IMR-90 (cell line): ENCODE measurements at regions of chr16 and their contacts with region 1.

Region 1: DNA sequence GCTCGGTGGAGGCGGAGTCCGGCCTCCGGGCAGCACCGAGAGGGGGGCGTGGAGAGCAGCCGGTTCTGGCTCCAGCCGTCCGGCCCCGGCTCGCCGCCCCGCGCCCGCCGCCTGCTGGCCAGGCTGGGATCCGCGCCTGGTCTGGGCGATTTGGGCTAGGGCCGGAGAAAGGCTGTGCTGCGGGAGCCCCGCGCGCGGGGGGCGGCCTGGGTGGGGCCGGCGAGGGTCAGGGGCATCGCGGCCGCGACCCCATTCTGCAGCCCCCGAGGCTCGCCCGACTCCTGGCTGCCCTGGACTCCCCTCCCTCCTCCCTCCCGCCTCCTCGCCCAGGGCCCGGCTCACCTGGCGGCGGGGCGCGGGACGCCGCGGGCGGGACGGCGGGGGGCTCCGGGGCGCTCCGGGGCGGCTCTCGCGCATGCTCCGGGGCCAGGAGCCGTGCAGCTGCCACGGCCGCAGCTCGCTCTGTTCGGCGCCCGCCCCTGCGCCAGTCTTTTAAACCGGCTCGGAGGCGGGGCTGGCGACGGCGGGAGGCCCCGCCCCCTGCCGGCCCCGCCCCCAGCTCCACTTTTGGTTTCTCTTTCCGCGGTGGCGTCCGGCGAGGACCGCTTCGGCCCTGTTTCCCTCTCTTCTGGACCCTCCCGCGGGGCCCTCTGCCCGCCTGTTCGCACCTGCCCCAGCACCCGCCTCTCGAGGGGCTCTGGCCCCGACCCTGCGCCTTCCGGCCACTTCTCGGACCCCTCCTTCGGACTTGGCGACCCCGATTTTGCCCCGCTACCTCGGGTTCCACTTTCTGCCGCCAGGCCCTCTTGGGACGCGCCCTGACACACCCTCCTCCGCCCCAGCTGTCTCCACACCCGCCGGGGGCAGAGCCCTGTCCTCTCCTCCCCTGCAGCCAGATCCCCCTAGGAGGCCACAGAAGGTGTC is at the start of gene SOCS1:
- DNase-seq: peak; percentile 84
- ATAC-seq: peak; percentile 76
- H3K4me3 ChIP-seq: peak within 1 kb of the TSS; percentile 87
- H3K27ac ChIP-seq: peak within 1 kb of the TSS; percentile 97
- H3K4me1 ChIP-seq: peaks cover 21% of the 10 kb centered on the region
- H3K27me3 ChIP-seq: no peaks in the 10 kb centered on the region
- CTCF ChIP-seq: peak; percentile 82
- POLR2A ChIP-seq: peak; percentile 99
- RAD21 ChIP-seq: peak; percentile 85
- total RNA-seq, gene SOCS1: 2.0 and 2.2 TPM in 2 replicates

Region 2: DNA sequence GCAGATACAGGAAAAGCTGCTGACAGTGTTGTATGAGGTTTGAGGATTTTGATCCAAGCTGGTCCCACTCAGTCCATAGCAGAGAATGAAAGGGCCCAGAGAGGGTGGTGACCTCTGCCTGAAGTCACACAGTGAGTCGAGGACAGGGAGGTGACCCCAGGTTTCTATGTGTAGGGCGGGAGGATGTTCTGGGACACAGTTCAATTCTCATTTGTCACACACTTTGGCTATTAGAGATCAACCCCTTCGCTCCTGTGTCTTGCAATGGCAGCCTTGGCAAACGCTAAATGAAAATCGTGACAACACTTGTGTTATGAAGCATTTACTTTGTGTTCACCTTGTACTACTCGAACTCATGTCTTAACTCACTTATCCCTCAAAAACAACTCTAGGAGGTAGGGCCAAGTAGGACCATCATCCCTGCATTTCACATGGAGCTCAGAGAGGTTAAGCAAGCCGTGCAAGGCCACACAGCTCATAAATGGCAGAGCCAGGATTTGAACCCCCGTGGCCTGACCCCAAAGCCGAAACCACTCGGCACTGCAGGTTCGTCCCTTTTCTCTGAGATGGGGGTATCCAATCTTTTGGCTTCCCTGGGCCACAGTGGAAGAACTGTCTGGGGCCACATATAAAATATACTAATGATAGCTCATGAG is 323.9 kb before region 1 on chr16:
- CTCF ChIA-PET with region 1: no interaction called
- POLR2A ChIA-PET with region 1: interaction called, 10 read pairs
- dilution Hi-C with region 1: no loop called
- in situ Hi-C with region 1: no loop called
- intact Hi-C with region 1: no loop called
- DNase-seq: no peak
- ATAC-seq: no peak
- H3K4me3 ChIP-seq: no peak overlapping the region
- H3K27ac ChIP-seq: no peak overlapping the region
- H3K4me1 ChIP-seq: peaks cover 5% of the 10 kb centered on the region
- H3K27me3 ChIP-seq: no peaks in the 10 kb centered on the region
- CTCF ChIP-seq: no peak
- POLR2A ChIP-seq: no peak
- RAD21 ChIP-seq: no peak

Region 3: GRCh38 chr16:10971560-10971961 is 284.4 kb before region 1 on chr16:
- CTCF ChIA-PET with region 1: interaction called, 12 read pairs
- POLR2A ChIA-PET with region 1: interaction called, 5 read pairs
- dilution Hi-C with region 1: no loop called
- in situ Hi-C with region 1: loop called (anchors 5 kb)
- intact Hi-C with region 1: loop called (anchors 1 kb)
- DNase-seq: peak; percentile 92
- ATAC-seq: peak; percentile 81
- H3K4me3 ChIP-seq: no peak overlapping the region
- H3K27ac ChIP-seq: peak overlapping the region; percentile 85
- H3K4me1 ChIP-seq: peaks cover 17% of the 10 kb centered on the region
- H3K27me3 ChIP-seq: no peaks in the 10 kb centered on the region
- CTCF ChIP-seq: peak; percentile 89
- POLR2A ChIP-seq: peak; percentile 58; the same call in 1 of the 2 replicates
- RAD21 ChIP-seq: peak; percentile 99

Region 4: DNA sequence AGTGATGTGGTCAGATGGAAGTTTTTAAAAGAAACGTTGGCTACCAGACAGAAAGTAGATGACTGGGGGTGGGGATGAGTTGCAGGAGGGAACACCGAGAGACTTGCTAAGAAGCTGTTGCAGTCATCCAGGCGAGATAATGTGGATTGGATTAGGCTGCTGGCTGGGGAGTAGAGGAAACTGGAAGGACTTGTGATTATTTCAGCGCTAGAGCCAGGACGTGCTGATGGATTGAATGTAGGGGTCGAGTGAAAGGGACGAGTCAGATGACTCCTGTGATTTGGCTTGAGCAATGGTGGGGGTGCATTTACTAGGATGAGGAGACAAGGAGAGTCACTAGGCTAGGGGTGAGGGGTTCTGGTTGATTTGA is 223.1 kb before region 1 on chr16:
- CTCF ChIA-PET with region 1: no interaction called
- POLR2A ChIA-PET with region 1: interaction called, 7 read pairs
- dilution Hi-C with region 1: no loop called
- in situ Hi-C with region 1: no loop called
- intact Hi-C with region 1: loop called (anchors 5 kb)
- DNase-seq: peak; percentile 80
- ATAC-seq: peak; percentile 45
- H3K4me3 ChIP-seq: no peak overlapping the region
- H3K27ac ChIP-seq: peak overlapping the region; percentile 53; the same call in 1 of the 2 replicates
- H3K4me1 ChIP-seq: peaks cover 38% of the 10 kb centered on the region
- H3K27me3 ChIP-seq: no peaks in the 10 kb centered on the region
- CTCF ChIP-seq: no peak
- POLR2A ChIP-seq: no peak
- RAD21 ChIP-seq: no peak

Region 5: DNA sequence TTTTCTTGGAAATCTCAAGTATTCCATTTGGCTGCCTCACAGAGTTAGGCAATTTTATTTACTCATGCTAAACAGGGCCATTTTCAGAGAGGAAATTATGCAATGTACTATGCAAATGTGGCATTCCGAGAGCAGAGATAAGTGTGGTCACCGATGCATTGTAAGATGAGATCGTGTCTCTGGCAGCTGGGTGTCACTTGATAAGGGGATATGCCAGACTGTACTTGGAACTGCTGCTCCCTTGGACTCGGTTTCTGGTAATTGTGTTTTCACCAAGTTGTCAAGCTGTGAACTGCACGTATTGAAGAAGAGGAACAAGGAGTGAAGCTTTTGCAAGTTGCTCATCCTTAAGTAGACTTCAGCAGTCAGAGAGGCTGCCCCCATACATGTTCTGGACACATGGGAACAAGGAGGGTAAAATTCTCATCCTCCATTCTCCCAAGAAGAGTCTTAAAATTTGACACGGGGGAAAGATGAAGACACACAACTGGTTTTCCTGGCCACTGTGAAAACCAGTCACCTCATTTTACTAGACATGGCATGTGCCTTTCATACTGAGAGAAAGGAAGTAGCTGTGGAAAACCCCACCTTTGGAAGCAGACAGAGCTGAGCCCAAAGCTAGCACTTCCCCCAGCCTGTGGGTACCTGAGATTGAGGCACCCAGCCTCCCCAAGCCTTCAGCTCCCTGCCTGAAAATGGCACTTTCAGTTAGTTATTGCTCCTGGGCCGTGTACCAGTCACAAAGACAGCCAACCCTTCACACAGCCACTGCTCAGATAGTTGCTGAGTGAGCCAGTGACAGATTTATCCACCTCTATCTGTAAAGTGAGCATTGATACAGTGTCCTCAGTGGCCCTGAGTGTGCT is 150.7 kb before region 1 on chr16:
- CTCF ChIA-PET with region 1: interaction called, 8 read pairs
- POLR2A ChIA-PET with region 1: interaction called, 5 read pairs
- dilution Hi-C with region 1: no loop called
- in situ Hi-C with region 1: loop called (anchors 5 kb)
- intact Hi-C with region 1: loop called (anchors 2 kb)
- DNase-seq: peak; percentile 98
- ATAC-seq: peak; percentile 37
- H3K4me3 ChIP-seq: no peak overlapping the region
- H3K27ac ChIP-seq: peak overlapping the region; percentile 92
- H3K4me1 ChIP-seq: peaks cover 65% of the 10 kb centered on the region
- H3K27me3 ChIP-seq: no peaks in the 10 kb centered on the region
- CTCF ChIP-seq: no peak
- POLR2A ChIP-seq: no peak; the same call in 1 of the 2 replicates
- RAD21 ChIP-seq: 0 out of 2 replicates have a peak, but pooled peaks have one; percentile 3

Region 6: DNA sequence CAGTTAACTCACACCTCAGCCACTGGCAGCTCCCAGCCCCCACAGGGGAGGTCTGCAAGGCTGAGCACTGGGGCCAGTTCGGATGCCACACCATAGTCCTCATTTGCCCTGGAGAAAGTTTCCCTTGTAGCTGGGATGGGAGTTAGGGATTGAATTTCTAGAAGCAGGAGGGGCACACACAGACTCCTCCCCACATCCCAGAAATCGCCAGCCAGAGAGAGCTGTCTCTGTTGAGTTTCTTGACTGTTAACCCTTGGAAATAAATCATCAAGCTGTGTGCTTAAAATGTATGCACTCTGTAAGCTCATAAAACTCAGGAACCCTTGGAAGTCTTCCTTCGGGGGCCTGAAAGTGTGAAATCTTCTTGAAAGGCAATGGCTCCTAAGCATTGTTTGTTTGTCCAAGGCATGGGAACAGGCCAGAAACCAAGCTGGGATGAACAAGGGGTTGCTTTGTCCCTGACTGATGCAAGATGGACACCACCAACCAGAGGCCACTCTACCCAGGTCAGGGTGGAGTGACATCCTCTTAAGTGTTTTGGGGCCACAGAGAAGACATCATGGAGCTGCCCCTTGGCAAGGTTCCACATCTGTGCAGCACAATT is 17.8 kb after region 1 on chr16:
- CTCF ChIA-PET with region 1: no interaction called
- POLR2A ChIA-PET with region 1: interaction called, 18 read pairs
- dilution Hi-C with region 1: no loop called
- in situ Hi-C with region 1: no loop called
- intact Hi-C with region 1: no loop called
- DNase-seq: no peak
- ATAC-seq: peak; percentile 83
- H3K4me3 ChIP-seq: no peak overlapping the region
- H3K27ac ChIP-seq: peak overlapping the region; percentile 7; the same call in 1 of the 2 replicates
- H3K4me1 ChIP-seq: peaks cover 7% of the 10 kb centered on the region; the same call in 1 of the 2 replicates
- H3K27me3 ChIP-seq: peaks cover 6% of the 10 kb centered on the region
- CTCF ChIP-seq: no peak
- POLR2A ChIP-seq: no peak
- RAD21 ChIP-seq: no peak

Region 7: GRCh38 chr16:11361701-11362451 is 105.9 kb after region 1 on chr16:
- CTCF ChIA-PET with region 1: interaction called, 7 read pairs
- POLR2A ChIA-PET with region 1: no interaction called
- dilution Hi-C with region 1: no loop called
- in situ Hi-C with region 1: loop called (anchors 5 kb)
- intact Hi-C with region 1: no loop called
- DNase-seq: no peak
- ATAC-seq: no peak
- H3K4me3 ChIP-seq: no peak overlapping the region
- H3K27ac ChIP-seq: peak overlapping the region; percentile 64; the same call in 1 of the 2 replicates
- H3K4me1 ChIP-seq: peaks cover 43% of the 10 kb centered on the region
- H3K27me3 ChIP-seq: no peaks in the 10 kb centered on the region
- CTCF ChIP-seq: no peak
- POLR2A ChIP-seq: no peak
- RAD21 ChIP-seq: no peak